ENCODE measurements at regions of chr5 and their contacts with region 1.

Region 1: GRCh38 chr5:97142521-97143254 is at the start of gene LIX1:
- DNase-seq: peak; percentile 50
- H3K4me3 ChIP-seq: no peak within 1 kb of the TSS
- H3K27ac ChIP-seq: no peak within 1 kb of the TSS
- H3K4me1 ChIP-seq: no peaks in the 10 kb centered on the region
- H3K27me3 ChIP-seq: peaks cover 5 to 13% of the 10 kb centered on the region in 2 experiments
- CTCF ChIP-seq: peak; percentile 52 to 53
- POLR2A ChIP-seq: no peak
- total RNA-seq, gene LIX1: not detected in 2 replicates

Region 2: DNA sequence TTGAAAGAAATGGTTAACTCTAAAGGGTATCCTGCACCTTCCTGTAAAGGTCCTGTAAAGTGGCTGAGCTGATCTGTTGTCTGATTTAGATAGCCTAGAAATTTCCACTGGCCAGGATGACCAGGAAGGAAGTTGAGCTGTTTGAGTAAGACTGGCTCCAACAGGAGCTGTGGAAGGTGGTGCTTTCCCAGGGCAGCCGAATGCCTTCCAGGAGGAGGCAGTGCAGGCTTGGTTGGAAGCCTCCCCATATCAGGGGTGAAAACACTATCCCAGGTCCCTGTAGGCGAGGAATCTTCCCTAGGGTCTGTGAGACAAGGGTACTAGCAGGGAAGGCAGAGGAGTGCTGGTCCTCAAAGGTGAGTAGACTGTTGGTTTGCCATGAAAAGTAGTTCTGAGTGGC is 98.6 kb before region 1 on chr5:
- CTCF ChIA-PET with region 1: interaction called, 38 read pairs
- POLR2A ChIA-PET with region 1: no interaction called
- dilution Hi-C with region 1: no loop called
- intact Hi-C with region 1: loop called (anchors 1 kb)
- DNase-seq: peak; percentile 66
- H3K4me3 ChIP-seq: no peak overlapping the region
- H3K27ac ChIP-seq: no peak overlapping the region
- H3K4me1 ChIP-seq: peaks cover 5% of the 10 kb centered on the region
- H3K27me3 ChIP-seq: peaks cover 2 to 15% of the 10 kb centered on the region in 2 experiments
- CTCF ChIP-seq: peak; percentile 28 to 55
- POLR2A ChIP-seq: no peak

Region 3: DNA sequence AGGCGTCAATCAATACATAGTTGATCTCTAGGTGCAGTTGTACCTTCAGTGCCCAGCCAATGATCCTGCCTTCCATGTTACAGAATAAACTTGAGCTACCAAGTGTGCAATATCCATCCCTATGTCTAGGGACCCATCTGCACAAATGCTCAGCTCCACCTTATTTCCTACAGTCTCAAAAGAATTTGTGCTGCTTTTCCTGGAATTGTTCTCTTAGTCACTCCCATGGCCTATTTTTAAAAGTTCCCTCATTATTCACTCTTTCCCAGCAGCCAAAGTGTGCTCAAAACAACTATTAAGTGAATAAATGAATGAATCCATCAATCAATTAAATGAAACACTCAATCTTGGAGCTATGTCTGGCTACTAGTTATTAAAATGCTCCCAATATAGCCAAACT is 15.0 kb before region 1 on chr5:
- CTCF ChIA-PET with region 1: interaction called, 15 read pairs
- POLR2A ChIA-PET with region 1: no interaction called
- dilution Hi-C with region 1: no loop called
- intact Hi-C with region 1: no loop called
- DNase-seq: peak; percentile 82
- H3K4me3 ChIP-seq: no peak overlapping the region
- H3K27ac ChIP-seq: peak overlapping the region; percentile 24
- H3K4me1 ChIP-seq: peaks cover 11% of the 10 kb centered on the region
- H3K27me3 ChIP-seq: peaks cover 0 to 3% of the 10 kb centered on the region in 2 experiments
- CTCF ChIP-seq: no peak
- POLR2A ChIP-seq: no peak

Region 4: DNA sequence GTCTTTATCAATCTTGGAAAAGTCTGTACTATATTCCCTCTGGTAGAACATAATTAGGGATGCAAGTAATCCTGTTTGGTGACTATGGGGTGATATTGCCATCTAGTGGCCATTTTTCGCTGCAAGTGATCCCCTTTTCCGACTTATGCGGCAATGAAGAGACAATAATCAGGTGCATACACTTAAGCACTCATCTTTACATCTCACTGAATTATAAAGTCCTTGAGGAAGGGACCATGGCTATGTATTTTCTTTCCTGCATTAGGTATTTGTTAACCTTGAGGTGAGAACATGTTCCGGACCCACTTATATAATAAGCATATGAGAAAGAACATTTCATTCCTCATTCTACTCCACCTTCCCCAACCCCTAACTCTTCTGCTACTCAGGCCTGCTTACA is 19.4 kb after region 1 on chr5:
- CTCF ChIA-PET with region 1: interaction called, 10 read pairs
- POLR2A ChIA-PET with region 1: no interaction called
- dilution Hi-C with region 1: no loop called
- intact Hi-C with region 1: no loop called
- DNase-seq: peak; percentile 86
- H3K4me3 ChIP-seq: no peak overlapping the region
- H3K27ac ChIP-seq: no peak overlapping the region
- H3K4me1 ChIP-seq: no peaks in the 10 kb centered on the region
- H3K27me3 ChIP-seq: no peaks in the 10 kb centered on the region
- CTCF ChIP-seq: peak; percentile 68 to 79
- POLR2A ChIP-seq: no peak

Measured in endothelial cell of umbilical vein (primary cell).